CD4-positive, alpha-beta T cell (primary cell): ENCODE measurements at regions of chr5 and their contacts with region 1.

Region 1: GRCh38 chr5:178626484-178627258 is at the start of gene CLK4:
- DNase-seq: peak; percentile 94 to 98 (median 96)
- ATAC-seq: peak; percentile 81
- H3K4me3 ChIP-seq: peak within 1 kb of the TSS; percentile 87
- H3K4me3 Mint-ChIP-seq: peak within 1 kb of the TSS; percentile 95
- H3K27ac ChIP-seq: peak within 1 kb of the TSS; percentile 95 to 99
- H3K27ac Mint-ChIP-seq: peak within 1 kb of the TSS; percentile 96
- H3K4me1 ChIP-seq: peaks cover 23% of the 10 kb centered on the region
- H3K4me1 Mint-ChIP-seq: peaks cover 48% of the 10 kb centered on the region
- H3K27me3 ChIP-seq: no peaks in the 10 kb centered on the region
- H3K27me3 Mint-ChIP-seq: no peaks in the 10 kb centered on the region
- CTCF ChIP-seq: no peak
- total RNA-seq, gene CLK4: 109 to 123 TPM

Region 2: GRCh38 chr5:178232124-178232919 is 394.3 kb before region 1 on chr5 and contains the start of gene PHYKPL:
- CTCF ChIA-PET with region 1: interaction called, 3 read pairs
- POLR2A ChIA-PET with region 1: no interaction called
- intact Hi-C with region 1: loop called in 1 of 2 experiments (anchors 2 kb)
- DNase-seq: peak; percentile 44 to 83 (median 64)
- ATAC-seq: peak; percentile 60
- H3K4me3 ChIP-seq: peak within 1 kb of the TSS; percentile 94
- H3K4me3 Mint-ChIP-seq: peak within 1 kb of the TSS; percentile 90
- H3K27ac ChIP-seq: peak within 1 kb of the TSS; percentile 81 to 85
- H3K27ac Mint-ChIP-seq: peak within 1 kb of the TSS; percentile 84
- H3K4me1 ChIP-seq: peaks cover 85% of the 10 kb centered on the region
- H3K4me1 Mint-ChIP-seq: peaks cover 54% of the 10 kb centered on the region
- H3K27me3 ChIP-seq: no peaks in the 10 kb centered on the region
- H3K27me3 Mint-ChIP-seq: no peaks in the 10 kb centered on the region
- CTCF ChIP-seq: no peak
- total RNA-seq, gene PHYKPL: 90.9 to 92.8 TPM

Region 3: GRCh38 chr5:178413988-178414387 is 212.7 kb before region 1 on chr5:
- CTCF ChIA-PET with region 1: no interaction called
- POLR2A ChIA-PET with region 1: no interaction called
- intact Hi-C with region 1: no loop called
- DNase-seq: no peak
- ATAC-seq: no peak
- H3K4me3 ChIP-seq: no peak overlapping the region
- H3K4me3 Mint-ChIP-seq: no peak overlapping the region
- H3K27ac ChIP-seq: no peak overlapping the region
- H3K27ac Mint-ChIP-seq: no peak overlapping the region
- H3K4me1 ChIP-seq: no peaks in the 10 kb centered on the region
- H3K4me1 Mint-ChIP-seq: no peaks in the 10 kb centered on the region
- H3K27me3 ChIP-seq: no peaks in the 10 kb centered on the region
- H3K27me3 Mint-ChIP-seq: peaks cover 4% of the 10 kb centered on the region
- CTCF ChIP-seq: no peak

Region 4: DNA sequence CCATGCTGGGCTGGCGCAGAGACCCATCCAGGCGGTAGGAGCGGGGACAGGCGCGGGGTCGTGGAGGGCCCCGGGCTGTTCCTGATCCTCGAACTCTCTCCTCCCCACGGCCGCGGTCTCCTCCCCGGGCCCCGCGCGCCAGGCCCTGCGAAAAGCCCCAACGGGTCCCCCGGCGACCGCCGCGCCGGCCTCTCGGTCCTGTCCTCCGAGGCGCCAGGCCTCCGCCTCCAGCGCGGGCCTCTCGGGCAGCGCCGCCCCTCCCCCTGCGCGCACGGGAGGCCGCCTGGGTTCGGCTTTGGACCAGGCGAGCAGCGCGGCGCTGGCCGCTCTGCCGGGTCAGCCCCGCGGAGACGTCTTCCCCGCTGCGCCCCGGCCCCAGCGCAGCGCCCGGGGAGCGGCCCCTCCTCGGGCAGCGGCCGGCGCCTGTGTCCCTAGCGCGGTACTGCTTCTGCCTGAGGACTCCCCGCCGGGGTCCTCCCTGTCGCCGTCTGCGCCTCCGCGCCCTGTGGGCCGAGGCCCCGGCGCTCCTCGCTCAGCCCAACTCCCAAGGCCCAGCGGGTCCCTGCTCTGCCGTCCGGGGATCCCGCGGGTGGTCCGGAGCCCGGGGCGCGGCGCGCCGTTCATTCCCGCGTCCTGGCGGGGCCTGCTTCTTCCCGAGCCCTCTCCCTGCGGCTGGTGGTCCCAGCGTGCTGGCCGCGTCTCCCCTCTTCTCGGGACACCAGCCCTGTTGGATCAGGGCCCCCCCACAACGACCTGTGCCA is 49.9 kb before region 1 on chr5:
- CTCF ChIA-PET with region 1: no interaction called
- POLR2A ChIA-PET with region 1: no interaction called
- intact Hi-C with region 1: no loop called
- DNase-seq: no peak
- ATAC-seq: no peak
- H3K4me3 ChIP-seq: no peak overlapping the region
- H3K4me3 Mint-ChIP-seq: no peak overlapping the region
- H3K27ac ChIP-seq: no peak overlapping the region
- H3K27ac Mint-ChIP-seq: no peak overlapping the region
- H3K4me1 ChIP-seq: no peaks in the 10 kb centered on the region
- H3K4me1 Mint-ChIP-seq: no peaks in the 10 kb centered on the region
- H3K27me3 ChIP-seq: peaks cover 23 to 30% of the 10 kb centered on the region in 2 experiments
- H3K27me3 Mint-ChIP-seq: peaks cover 63% of the 10 kb centered on the region
- CTCF ChIP-seq: no peak

Region 5: GRCh38 chr5:178677429-178677828 is 50.8 kb after region 1 on chr5:
- CTCF ChIA-PET with region 1: no interaction called
- POLR2A ChIA-PET with region 1: no interaction called
- intact Hi-C with region 1: no loop called
- DNase-seq: no peak
- ATAC-seq: no peak
- H3K4me3 ChIP-seq: no peak overlapping the region
- H3K4me3 Mint-ChIP-seq: no peak overlapping the region
- H3K27ac ChIP-seq: no peak overlapping the region
- H3K27ac Mint-ChIP-seq: no peak overlapping the region
- H3K4me1 ChIP-seq: no peaks in the 10 kb centered on the region
- H3K4me1 Mint-ChIP-seq: no peaks in the 10 kb centered on the region
- H3K27me3 ChIP-seq: peaks cover 0 to 2% of the 10 kb centered on the region in 2 experiments
- H3K27me3 Mint-ChIP-seq: peaks cover 19% of the 10 kb centered on the region
- CTCF ChIP-seq: no peak

Region 6: DNA sequence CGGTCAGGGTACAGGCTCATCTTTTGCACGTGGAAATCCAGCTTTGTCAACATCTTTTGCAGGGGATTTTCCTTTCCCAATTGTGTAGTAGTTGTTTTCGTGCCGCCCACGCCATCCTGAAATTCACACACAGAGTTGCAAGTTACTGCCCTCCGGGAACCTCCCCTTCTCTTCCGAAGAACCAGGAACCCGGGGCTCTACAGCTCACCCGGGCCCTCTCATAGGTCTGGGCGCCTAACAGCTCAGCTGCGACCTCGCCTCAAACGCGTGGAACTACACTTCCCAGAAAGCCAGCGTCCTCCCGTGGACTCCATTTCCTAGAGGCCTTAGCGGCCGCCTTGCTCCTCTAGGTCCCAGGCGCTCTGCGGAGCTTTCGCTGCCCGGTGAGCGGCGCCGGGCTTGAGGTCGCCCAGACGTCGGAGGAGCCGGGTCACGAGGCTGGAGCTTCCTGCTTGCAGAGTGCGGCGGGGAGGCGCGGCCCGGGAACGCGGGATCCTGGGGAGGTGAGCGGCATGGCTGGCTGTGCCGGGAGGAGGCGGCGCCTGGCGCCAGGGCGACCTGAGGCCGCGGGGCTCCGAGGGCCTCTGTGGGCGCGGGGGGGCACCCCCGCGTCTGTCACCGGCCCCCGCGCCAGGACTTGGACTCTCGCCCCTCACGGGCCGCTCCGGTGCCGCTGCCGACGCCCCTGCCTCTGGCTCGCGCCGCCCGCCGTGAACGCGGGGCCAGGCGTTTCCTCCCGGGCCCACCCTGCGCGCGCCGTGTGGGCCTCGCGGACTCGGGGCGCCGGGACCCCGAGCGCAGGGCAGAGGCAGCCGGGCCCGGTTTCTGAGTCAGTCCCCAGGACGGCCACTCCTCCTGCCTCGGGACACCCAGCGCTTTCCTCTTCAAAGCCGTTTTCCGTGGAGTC is 233.2 kb after region 1 on chr5 and contains the start of gene ZNF354B:
- CTCF ChIA-PET with region 1: no interaction called
- POLR2A ChIA-PET with region 1: interaction called, 10 read pairs
- intact Hi-C with region 1: loop called in 1 of 2 experiments (anchors 5 kb)
- DNase-seq: peak; percentile 65 to 94 (median 78)
- ATAC-seq: peak; percentile 98
- H3K4me3 ChIP-seq: peak within 1 kb of the TSS; percentile 60
- H3K4me3 Mint-ChIP-seq: peak within 1 kb of the TSS; percentile 84
- H3K27ac ChIP-seq: peak within 1 kb of the TSS; percentile 1 to 46
- H3K27ac Mint-ChIP-seq: peak within 1 kb of the TSS; percentile 82
- H3K4me1 ChIP-seq: peaks cover 16% of the 10 kb centered on the region
- H3K4me1 Mint-ChIP-seq: peaks cover 36% of the 10 kb centered on the region
- H3K27me3 ChIP-seq: peaks cover 0 to under 1% of the 10 kb centered on the region in 2 experiments
- H3K27me3 Mint-ChIP-seq: no peaks in the 10 kb centered on the region
- CTCF ChIP-seq: no peak
- total RNA-seq, gene ZNF354B: 6.2 to 6.3 TPM

Region 7: DNA sequence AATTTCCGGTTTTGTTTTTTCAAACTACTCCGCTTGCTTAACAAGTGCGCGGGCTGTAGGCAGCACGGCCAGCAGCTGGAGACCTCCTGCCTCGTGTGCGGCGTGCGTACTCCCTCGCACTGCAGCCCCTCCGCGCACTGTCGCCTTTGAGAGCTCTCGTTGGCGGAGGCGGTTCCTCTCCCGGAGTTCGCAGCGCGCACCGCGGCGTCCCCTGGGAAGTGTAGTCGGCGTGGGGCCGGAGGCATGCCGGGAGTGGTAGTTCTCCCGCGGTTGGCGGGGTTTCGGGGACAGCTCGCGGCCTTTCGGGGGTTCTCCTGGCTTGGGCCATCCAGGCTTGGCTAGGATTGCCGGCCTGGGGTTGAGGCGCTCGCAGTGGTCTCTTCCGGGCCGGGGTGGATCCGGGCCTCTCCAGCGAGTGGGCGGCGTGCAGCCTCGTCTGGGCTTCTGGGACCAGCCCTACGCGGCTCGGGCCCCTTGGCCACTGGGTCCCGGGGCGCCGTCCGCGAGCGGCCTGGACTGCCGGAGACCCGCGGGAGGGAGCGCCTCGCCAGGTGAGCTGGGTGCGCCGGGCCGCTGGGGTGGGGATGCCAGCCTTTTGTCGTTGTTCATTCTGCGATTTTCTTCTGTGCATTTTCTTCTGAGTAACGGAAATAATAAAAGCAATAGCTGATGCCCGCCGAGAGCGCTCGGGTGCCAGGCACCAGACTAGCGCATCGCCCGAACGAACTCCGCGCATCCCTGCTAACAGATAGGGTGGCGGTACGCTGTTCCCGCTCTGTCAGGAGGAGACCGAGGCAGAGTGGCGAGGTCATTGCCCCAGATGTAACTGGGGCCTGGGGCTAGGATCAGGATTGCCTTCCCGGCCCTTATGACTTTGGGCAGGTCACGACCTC is 433.7 kb after region 1 on chr5 and contains the start of gene ZNF354C:
- CTCF ChIA-PET with region 1: no interaction called
- POLR2A ChIA-PET with region 1: interaction called, 5 read pairs
- intact Hi-C with region 1: loop called in 1 of 2 experiments (anchors 2 kb)
- DNase-seq: peak; percentile 73 to 91 (median 82)
- ATAC-seq: peak; percentile 97
- H3K4me3 ChIP-seq: peak within 1 kb of the TSS; percentile 75
- H3K4me3 Mint-ChIP-seq: peak within 1 kb of the TSS; percentile 96
- H3K27ac ChIP-seq: peak within 1 kb of the TSS; percentile 47 to 61
- H3K27ac Mint-ChIP-seq: peak within 1 kb of the TSS; percentile 95
- H3K4me1 ChIP-seq: peaks cover 15% of the 10 kb centered on the region
- H3K4me1 Mint-ChIP-seq: peaks cover 34% of the 10 kb centered on the region
- H3K27me3 ChIP-seq: no peaks in the 10 kb centered on the region
- H3K27me3 Mint-ChIP-seq: peaks cover 9% of the 10 kb centered on the region
- CTCF ChIP-seq: no peak
- total RNA-seq, gene ZNF354C: 2.5 to 2.9 TPM

Region 8: GRCh38 chr5:179697993-179698934 is 1071.6 kb after region 1 on chr5:
- CTCF ChIA-PET with region 1: no interaction called
- POLR2A ChIA-PET with region 1: no interaction called
- intact Hi-C with region 1: loop called in 1 of 2 experiments (anchors 10 kb)
- DNase-seq: peak; percentile 97 to 100 (median 98)
- ATAC-seq: peak; percentile 86
- H3K4me3 ChIP-seq: peak overlapping the region; percentile 93
- H3K4me3 Mint-ChIP-seq: peak overlapping the region; percentile 95
- H3K27ac ChIP-seq: peak overlapping the region; percentile 83 to 94
- H3K27ac Mint-ChIP-seq: peak overlapping the region; percentile 98
- H3K4me1 ChIP-seq: peaks cover 49% of the 10 kb centered on the region
- H3K4me1 Mint-ChIP-seq: peaks cover 47% of the 10 kb centered on the region
- H3K27me3 ChIP-seq: no peaks in the 10 kb centered on the region
- H3K27me3 Mint-ChIP-seq: no peaks in the 10 kb centered on the region
- CTCF ChIP-seq: no peak

Region 9: DNA sequence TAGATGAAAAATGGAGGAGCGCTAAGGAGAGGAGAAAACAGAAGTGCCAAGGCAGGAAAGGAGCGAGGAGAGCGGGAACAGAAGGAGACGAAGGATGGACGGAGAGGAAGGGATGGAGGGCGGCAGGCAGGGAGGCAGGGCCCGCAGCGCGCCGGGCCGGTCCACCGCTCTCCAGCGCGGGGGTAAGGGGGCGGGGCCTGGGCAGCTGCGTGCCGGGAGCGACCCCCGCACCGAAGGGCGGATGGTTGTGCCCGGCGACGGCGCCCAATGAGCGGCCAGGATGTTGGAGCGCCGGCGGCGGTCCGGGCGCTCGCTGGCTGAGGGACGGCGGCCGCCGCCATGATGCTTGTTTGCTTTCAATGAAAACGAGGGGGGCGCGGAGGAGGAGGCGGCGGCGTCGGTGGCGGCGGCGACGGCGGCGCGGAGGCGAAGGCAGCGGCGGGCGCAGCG is 1867.4 kb after region 1 on chr5 and contains the start of gene CNOT6:
- CTCF ChIA-PET with region 1: no interaction called
- POLR2A ChIA-PET with region 1: no interaction called
- intact Hi-C with region 1: loop called in 1 of 2 experiments (anchors 5 kb)
- DNase-seq: peak; percentile 89 to 99 (median 94)
- ATAC-seq: peak; percentile 88
- H3K4me3 ChIP-seq: peak within 1 kb of the TSS; percentile 73
- H3K4me3 Mint-ChIP-seq: peak within 1 kb of the TSS; percentile 100
- H3K27ac ChIP-seq: peak within 1 kb of the TSS; percentile 60 to 83
- H3K27ac Mint-ChIP-seq: peak within 1 kb of the TSS; percentile 98
- H3K4me1 ChIP-seq: peaks cover 34% of the 10 kb centered on the region
- H3K4me1 Mint-ChIP-seq: peaks cover 40% of the 10 kb centered on the region
- H3K27me3 ChIP-seq: no peaks in the 10 kb centered on the region
- H3K27me3 Mint-ChIP-seq: no peaks in the 10 kb centered on the region
- CTCF ChIP-seq: no peak
- total RNA-seq, gene CNOT6: 12.5 to 13.8 TPM